HepG2 (cell line): ENCODE measurements at regions of chr3 and their contacts with region 1.

Region 1: DNA sequence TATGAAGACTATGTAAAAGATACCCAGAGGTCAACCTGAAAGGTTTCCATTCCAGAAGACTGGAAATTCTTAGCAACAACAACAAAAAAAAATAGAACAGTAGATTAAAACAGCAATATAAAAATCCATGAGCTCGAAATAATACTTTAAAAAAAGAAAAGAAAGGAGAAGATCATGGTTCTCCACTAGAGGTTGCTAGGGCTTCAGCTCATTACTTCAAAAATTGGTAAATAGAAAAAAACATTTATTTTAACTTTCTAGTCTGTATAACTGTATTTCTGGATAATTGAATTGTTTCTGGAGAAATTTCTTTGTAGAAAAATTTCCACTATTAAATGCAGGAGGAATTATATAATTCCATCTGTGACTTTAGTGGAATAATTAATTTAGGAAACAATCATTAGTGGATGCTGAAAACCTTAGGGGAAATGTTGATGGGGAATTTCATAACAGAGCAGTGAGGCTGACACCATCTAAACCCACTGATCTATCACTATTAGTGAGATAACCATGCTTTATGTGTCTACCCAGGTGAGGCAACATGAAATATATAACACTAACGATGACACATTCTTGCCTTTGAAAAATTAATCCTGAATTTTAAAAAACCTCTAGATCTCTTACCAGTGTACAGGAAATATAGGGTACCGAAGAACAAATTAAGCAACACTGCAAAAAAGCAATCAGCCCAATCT is 62.5 kb upstream of the SNRK start:
- DNase-seq: no peak
- ATAC-seq: no peak
- H3K4me3 ChIP-seq: no peak overlapping the region
- H3K27ac ChIP-seq: no peak overlapping the region
- H3K4me1 ChIP-seq: no peaks in the 10 kb centered on the region
- H3K27me3 ChIP-seq: peaks cover 0 to 3% of the 10 kb centered on the region in 2 experiments; a peak in 2 of 5 replicates
- CTCF ChIP-seq: no peak
- EP300 ChIP-seq: no peak
- POLR2A ChIP-seq: no peak
- RAD21 ChIP-seq: no peak

Region 2: GRCh38 chr3:43031485-43031884 is 192.3 kb before region 1 on chr3:
- CTCF ChIA-PET with region 1: no interaction called
- POLR2A ChIA-PET with region 1: no interaction called
- in situ Hi-C with region 1: no loop called
- intact Hi-C with region 1: no loop called
- DNase-seq: no peak
- ATAC-seq: no peak
- H3K4me3 ChIP-seq: no peak overlapping the region
- H3K27ac ChIP-seq: no peak overlapping the region
- H3K4me1 ChIP-seq: peaks cover 5% of the 10 kb centered on the region
- H3K27me3 ChIP-seq: peaks cover 2% of the 10 kb centered on the region in 2 experiments; a peak in 3 of 5 replicates
- CTCF ChIP-seq: no peak
- EP300 ChIP-seq: no peak
- POLR2A ChIP-seq: no peak
- RAD21 ChIP-seq: no peak

Region 3: DNA sequence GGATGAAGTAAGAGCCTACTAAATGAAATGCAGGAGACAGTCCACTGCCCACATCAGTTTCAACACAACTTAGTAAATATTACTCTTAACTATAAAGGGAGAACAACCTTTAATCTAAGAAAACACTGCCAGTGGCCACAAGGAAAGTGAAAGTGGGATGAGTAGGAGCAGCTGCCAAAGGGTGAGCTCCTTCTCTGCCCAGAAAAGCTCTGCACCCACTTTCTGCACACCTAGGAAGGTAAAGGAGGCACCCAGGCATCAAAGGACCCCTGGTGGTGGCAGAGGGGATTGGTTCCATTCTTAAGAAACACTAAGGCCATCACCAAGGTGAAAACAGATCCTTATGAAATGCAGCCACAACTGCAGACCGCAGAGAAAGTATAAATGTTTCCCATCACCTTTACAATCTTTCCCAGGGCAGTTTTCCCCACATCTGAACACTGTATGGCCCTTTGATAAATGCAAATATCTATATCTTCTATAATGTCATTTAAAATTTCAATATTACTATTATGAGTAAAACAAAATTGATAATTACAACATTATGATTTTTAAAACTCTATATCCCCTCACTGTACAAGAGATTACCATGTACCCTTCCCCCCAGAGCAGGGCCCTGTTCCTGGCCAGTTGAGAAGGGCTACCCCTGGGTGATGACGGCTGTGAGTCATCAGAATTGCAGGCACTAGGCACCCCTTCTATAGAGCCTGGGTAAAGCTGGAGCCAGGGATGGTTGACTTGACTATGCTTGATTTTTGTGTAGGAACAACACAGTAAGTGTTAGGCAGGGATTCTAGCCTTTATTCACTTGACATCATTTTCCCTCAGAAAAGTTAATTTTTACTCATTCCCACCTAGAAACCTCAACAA is 154.5 kb after region 1 on chr3:
- CTCF ChIA-PET with region 1: interaction called, 10 read pairs
- POLR2A ChIA-PET with region 1: no interaction called
- in situ Hi-C with region 1: loop called (anchors 5 kb)
- intact Hi-C with region 1: loop called (anchors 1 kb)
- DNase-seq: peak; percentile 31
- ATAC-seq: peak; percentile 84
- H3K4me3 ChIP-seq: no peak overlapping the region
- H3K27ac ChIP-seq: no peak overlapping the region
- H3K4me1 ChIP-seq: no peaks in the 10 kb centered on the region; the same call in 1 of the 2 replicates
- H3K27me3 ChIP-seq: no peaks in the 10 kb centered on the region
- CTCF ChIP-seq: peak; percentile 80
- EP300 ChIP-seq: no peak
- POLR2A ChIP-seq: no peak
- RAD21 ChIP-seq: peak; percentile 68

Region 4: GRCh38 chr3:43503067-43503728 is 279.4 kb after region 1 on chr3:
- CTCF ChIA-PET with region 1: no interaction called
- POLR2A ChIA-PET with region 1: no interaction called
- in situ Hi-C with region 1: loop called (anchors 10 kb)
- intact Hi-C with region 1: loop called (anchors 10 kb)
- DNase-seq: peak; percentile 15
- ATAC-seq: no peak; the same call in 2 of the 3 replicates
- H3K4me3 ChIP-seq: no peak overlapping the region
- H3K27ac ChIP-seq: no peak overlapping the region
- H3K4me1 ChIP-seq: no peaks in the 10 kb centered on the region
- H3K27me3 ChIP-seq: no peaks in the 10 kb centered on the region; a peak in 1 of 5 replicates
- CTCF ChIP-seq: peak; percentile 43
- EP300 ChIP-seq: no peak
- POLR2A ChIP-seq: no peak
- RAD21 ChIP-seq: no peak